ENCODE measurements at regions of chr1 and their contacts with region 1.

Region 1: GRCh38 chr1:67214420-67215174 is 48.3 kb downstream of the IL23R start:
- DNase-seq: peak; percentile 62
- H3K4me3 Mint-ChIP-seq: no peak overlapping the region
- H3K27ac Mint-ChIP-seq: no peak overlapping the region
- H3K4me1 Mint-ChIP-seq: peaks cover 46% of the 10 kb centered on the region
- H3K27me3 Mint-ChIP-seq: no peaks in the 10 kb centered on the region

Region 2: DNA sequence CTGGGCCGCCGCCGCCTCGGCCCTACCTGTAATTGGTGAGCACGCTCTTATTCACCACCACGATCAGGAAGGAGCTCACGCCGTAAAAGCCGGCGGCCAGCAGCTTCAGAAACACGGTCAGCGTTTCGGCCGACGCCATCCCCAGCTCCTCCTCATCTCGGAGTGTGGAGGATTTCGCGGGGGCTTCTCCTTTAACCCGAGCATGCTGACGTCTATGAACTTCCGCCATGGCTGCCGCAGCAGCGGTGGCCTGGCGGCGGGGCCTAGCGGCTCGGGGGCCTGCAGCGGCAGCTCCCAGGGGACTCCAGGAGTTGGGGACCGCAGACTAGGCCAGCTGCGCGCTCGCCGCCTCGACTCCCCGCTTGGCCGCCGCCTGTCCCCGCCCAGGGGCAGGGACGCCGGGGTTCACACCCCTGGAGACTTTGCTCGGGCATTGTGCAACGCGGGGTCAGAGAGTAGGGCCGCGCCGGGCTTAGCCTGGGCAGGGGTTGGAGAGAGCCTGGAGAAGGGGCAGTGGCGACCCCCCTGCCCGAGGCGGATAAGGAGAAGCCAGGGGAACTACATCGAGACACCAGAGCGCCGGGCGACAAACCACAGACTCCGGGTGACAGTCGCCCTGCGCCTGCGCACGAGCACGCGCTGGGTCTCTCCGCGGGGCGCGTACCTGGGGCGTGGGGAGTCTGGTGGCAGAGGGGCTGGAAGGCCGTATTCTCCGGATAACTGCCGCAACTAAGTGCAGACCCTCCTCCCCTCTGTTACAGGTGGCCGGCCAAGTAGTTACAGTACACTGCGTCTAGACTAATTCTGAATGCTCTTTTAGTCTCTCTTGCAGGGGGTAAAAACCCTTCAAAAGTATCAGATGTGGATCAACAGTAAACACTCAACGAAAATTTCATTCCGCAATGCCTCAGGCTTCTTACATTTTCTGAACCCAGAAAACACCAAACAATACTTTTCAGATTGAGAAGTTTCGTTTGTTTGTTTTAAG is 160.5 kb before region 1 on chr1 and contains the start of gene SLC35D1:
- CTCF ChIA-PET with region 1: interaction called, 16 read pairs
- POLR2A ChIA-PET with region 1: interaction called, 5 read pairs
- intact Hi-C with region 1: loop called (anchors 5 kb)
- DNase-seq: peak; percentile 84
- H3K4me3 Mint-ChIP-seq: peak within 1 kb of the TSS; percentile 85
- H3K27ac Mint-ChIP-seq: peak within 1 kb of the TSS; percentile 87
- H3K4me1 Mint-ChIP-seq: peaks cover 24% of the 10 kb centered on the region
- H3K27me3 Mint-ChIP-seq: no peaks in the 10 kb centered on the region
- total RNA-seq, gene SLC35D1: 11.0 to 11.1 TPM

Region 3: GRCh38 chr1:67085326-67085725 is 129.3 kb before region 1 on chr1:
- CTCF ChIA-PET with region 1: no interaction called
- POLR2A ChIA-PET with region 1: no interaction called
- intact Hi-C with region 1: no loop called
- DNase-seq: no peak
- H3K4me3 Mint-ChIP-seq: no peak overlapping the region
- H3K27ac Mint-ChIP-seq: no peak overlapping the region
- H3K4me1 Mint-ChIP-seq: no peaks in the 10 kb centered on the region
- H3K27me3 Mint-ChIP-seq: no peaks in the 10 kb centered on the region

Region 4: GRCh38 chr1:67194209-67194863 is 20.3 kb before region 1 on chr1:
- CTCF ChIA-PET with region 1: interaction called, 58 read pairs
- POLR2A ChIA-PET with region 1: interaction called, 6 read pairs
- intact Hi-C with region 1: loop called (anchors 1 kb)
- DNase-seq: no peak
- H3K4me3 Mint-ChIP-seq: no peak overlapping the region
- H3K27ac Mint-ChIP-seq: peak overlapping the region; percentile 79
- H3K4me1 Mint-ChIP-seq: peaks cover 28% of the 10 kb centered on the region
- H3K27me3 Mint-ChIP-seq: peaks cover 5% of the 10 kb centered on the region

Region 5: DNA sequence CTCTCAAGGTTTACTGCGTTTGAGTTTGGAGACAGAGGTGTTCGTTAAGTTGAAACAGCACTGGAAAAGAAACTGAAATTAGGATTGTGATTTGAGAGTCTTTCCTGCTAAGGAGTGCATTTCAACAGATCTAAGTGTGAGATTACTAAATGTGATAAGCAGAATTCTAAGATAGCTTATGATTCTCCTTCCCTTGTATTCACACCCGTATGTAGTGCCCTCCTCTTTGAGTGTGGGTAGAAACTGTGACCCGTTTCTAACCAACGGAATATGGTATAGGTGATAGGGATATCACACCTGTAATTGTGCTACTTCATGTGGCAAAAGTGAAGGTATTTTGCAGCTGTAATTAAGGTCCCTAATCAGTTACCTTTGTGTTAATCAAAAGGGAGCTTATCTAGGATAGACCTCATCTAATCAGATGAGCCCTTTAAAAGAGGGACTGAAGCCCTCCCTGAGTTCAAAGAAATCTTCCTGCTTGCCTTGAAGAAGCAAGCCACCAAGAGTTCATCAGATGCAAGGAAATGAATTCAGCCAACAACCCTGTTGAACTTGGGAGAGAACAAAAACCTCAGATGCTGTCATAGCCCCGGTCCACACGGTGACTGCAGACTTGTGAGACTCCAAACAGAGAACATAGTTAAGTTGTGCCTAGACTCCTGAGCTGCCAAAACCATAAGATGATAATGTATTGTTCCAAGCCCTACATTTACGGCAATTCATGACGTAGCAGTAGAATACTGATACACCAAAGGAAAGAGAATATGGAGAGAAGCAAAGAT is 80.4 kb after region 1 on chr1:
- CTCF ChIA-PET with region 1: interaction called, 12 read pairs
- POLR2A ChIA-PET with region 1: interaction called, 3 read pairs
- intact Hi-C with region 1: no loop called
- DNase-seq: peak; percentile 56
- H3K4me3 Mint-ChIP-seq: no peak overlapping the region
- H3K27ac Mint-ChIP-seq: peak overlapping the region; percentile 72
- H3K4me1 Mint-ChIP-seq: peaks cover 23% of the 10 kb centered on the region
- H3K27me3 Mint-ChIP-seq: peaks cover 10% of the 10 kb centered on the region

Region 6: GRCh38 chr1:67393240-67393639 is 178.6 kb after region 1 on chr1:
- CTCF ChIA-PET with region 1: interaction called, 10 read pairs
- POLR2A ChIA-PET with region 1: no interaction called
- intact Hi-C with region 1: no loop called
- DNase-seq: no peak
- H3K4me3 Mint-ChIP-seq: no peak overlapping the region
- H3K27ac Mint-ChIP-seq: no peak overlapping the region
- H3K4me1 Mint-ChIP-seq: peaks cover 6% of the 10 kb centered on the region
- H3K27me3 Mint-ChIP-seq: no peaks in the 10 kb centered on the region

Region 7: GRCh38 chr1:67500413-67500959 is 285.9 kb after region 1 on chr1:
- CTCF ChIA-PET with region 1: interaction called, 103 read pairs
- POLR2A ChIA-PET with region 1: no interaction called
- intact Hi-C with region 1: loop called (anchors 1 kb)
- DNase-seq: peak; percentile 93
- H3K4me3 Mint-ChIP-seq: no peak overlapping the region
- H3K27ac Mint-ChIP-seq: no peak overlapping the region
- H3K4me1 Mint-ChIP-seq: peaks cover 2% of the 10 kb centered on the region
- H3K27me3 Mint-ChIP-seq: peaks cover 6% of the 10 kb centered on the region

Region 8: DNA sequence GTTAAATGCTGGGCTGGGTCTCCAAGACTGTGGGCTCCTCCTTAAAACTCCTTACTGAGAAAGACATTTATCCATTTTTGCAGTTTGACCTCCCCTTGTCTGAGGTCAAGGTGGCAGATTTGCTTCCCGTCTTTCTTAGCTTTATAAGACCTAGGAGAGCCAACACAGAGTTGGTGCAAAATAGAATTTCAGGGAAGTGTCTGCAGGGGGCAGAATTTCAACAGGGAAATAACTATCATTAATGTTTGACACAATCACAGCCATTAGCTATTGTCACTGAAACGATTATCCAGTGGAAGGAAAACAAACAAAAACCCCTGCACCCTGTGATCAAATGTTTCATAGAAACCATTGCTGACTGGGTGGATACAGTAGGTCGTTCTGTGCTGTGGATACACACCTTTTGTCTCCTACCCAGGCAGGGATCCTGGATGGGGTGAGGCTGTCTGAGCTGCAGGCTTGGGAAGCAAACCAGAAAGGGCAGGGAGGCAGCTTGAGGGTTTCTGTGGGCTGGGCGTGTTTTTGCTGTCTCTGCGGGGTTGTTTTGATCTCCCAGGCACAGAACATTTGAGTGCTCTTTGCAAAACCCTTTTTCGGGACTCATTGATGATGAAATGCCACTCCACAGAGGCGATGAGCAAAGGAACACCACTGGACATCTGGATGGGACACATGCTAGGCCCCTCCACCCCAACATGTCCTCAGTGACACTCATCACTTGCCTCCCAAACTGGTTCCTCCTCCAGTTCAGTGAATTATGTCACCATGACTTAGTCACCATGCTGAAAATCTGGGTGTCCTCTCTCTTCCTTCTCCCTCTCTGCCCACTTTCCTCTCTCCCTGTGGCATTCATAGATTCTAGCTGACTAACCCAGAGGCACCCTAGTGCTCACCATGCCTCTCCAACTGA is 309.8 kb after region 1 on chr1:
- CTCF ChIA-PET with region 1: no interaction called
- POLR2A ChIA-PET with region 1: no interaction called
- intact Hi-C with region 1: no loop called
- DNase-seq: no peak
- H3K4me3 Mint-ChIP-seq: no peak overlapping the region
- H3K27ac Mint-ChIP-seq: no peak overlapping the region
- H3K4me1 Mint-ChIP-seq: no peaks in the 10 kb centered on the region
- H3K27me3 Mint-ChIP-seq: peaks cover 8% of the 10 kb centered on the region

Measured in activated CD4-positive, alpha-beta memory T cell treated with anti-CD3 and anti-CD28 coated beads for 36 hours (primary cell).